HEK293 (cell line): ENCODE measurements at regions of chr3 and their contacts with region 1.

Region 1: GRCh38 chr3:161905520-161906132 is 409.0 kb downstream of the OTOL1 start:
- H3K4me3 ChIP-seq: no peak overlapping the region
- H3K27ac ChIP-seq: no peak overlapping the region
- H3K4me1 ChIP-seq: no peaks in the 10 kb centered on the region
- CTCF ChIP-seq: no peak

Region 2: DNA sequence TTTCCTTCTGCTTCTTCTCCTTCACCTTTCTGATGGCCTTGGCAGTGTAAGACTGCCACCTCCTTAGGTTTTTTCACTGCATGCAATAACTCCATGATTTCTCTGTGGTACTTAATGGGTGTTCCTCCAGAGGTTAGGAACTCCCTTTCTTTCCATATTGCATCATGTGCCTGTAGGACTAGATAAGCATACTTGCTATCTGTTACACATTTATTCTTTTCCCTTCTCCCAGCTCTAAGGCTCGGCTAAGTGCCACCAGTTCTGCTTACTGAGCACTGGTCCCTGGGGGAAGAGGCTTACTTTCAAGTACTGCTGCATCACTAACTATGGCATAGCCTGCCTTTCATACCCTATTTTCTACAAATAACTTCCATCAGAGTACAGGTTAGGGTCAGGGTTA is 57.2 kb before region 1 on chr3:
- CTCF ChIA-PET with region 1: no interaction called
- POLR2A ChIA-PET with region 1: no interaction called
- H3K4me3 ChIP-seq: no peak overlapping the region
- H3K27ac ChIP-seq: no peak overlapping the region
- H3K4me1 ChIP-seq: no peaks in the 10 kb centered on the region
- CTCF ChIP-seq: no peak

Region 3: DNA sequence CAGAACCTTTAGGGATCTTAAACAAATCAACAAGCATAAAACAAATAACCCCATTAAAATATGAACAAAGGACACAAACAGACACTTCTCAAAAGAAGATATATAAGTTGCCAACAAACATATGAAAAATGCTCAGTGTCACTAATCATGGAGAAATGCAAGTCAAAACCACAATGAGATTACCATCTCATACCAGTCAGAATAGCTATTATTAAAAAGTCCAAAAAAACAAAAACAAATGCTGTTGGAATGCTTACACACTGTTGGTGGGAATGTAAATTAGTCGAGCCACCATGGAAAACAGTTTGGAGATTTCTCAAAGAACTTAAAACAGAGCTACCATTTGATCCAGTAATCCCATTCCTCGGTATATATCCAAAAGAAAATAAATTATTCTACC is 14.6 kb after region 1 on chr3:
- CTCF ChIA-PET with region 1: no interaction called
- POLR2A ChIA-PET with region 1: no interaction called
- H3K4me3 ChIP-seq: no peak overlapping the region
- H3K27ac ChIP-seq: no peak overlapping the region
- H3K4me1 ChIP-seq: no peaks in the 10 kb centered on the region
- CTCF ChIP-seq: no peak

Region 4: GRCh38 chr3:162034368-162034767 is 128.7 kb after region 1 on chr3:
- CTCF ChIA-PET with region 1: no interaction called
- POLR2A ChIA-PET with region 1: no interaction called
- H3K4me3 ChIP-seq: no peak overlapping the region
- H3K27ac ChIP-seq: no peak overlapping the region
- H3K4me1 ChIP-seq: no peaks in the 10 kb centered on the region
- CTCF ChIP-seq: no peak

Region 5: GRCh38 chr3:162072656-162073164 is 167.1 kb after region 1 on chr3:
- CTCF ChIA-PET with region 1: no interaction called
- POLR2A ChIA-PET with region 1: no interaction called
- H3K4me3 ChIP-seq: no peak overlapping the region
- H3K27ac ChIP-seq: no peak overlapping the region
- H3K4me1 ChIP-seq: no peaks in the 10 kb centered on the region
- CTCF ChIP-seq: no peak

Region 6: DNA sequence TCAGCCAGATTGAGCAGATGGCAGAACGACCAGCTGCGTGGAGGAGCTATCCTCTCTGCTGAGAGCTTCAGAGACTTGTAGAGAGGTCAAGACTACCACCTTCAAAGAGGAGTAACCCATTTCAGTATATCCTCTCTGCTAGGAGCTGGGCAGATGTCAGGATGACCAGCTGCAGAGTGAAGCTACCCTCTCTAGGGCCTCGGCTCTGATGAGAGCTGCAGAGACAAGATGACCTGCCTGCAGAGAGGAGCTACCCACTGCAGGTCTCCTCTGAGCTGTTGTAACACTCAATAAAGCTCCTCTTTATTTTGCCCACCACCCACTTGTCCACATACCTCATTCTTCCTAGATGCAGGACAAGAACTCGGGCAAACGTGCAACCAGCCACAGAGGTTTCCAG is 1113.6 kb after region 1 on chr3:
- CTCF ChIA-PET with region 1: no interaction called
- POLR2A ChIA-PET with region 1: interaction called, 10 read pairs
- H3K4me3 ChIP-seq: no peak overlapping the region
- H3K27ac ChIP-seq: no peak overlapping the region
- H3K4me1 ChIP-seq: no peaks in the 10 kb centered on the region
- CTCF ChIP-seq: no peak